ENCODE measurements at regions of chr11 and their contacts with region 1.

Region 1: DNA sequence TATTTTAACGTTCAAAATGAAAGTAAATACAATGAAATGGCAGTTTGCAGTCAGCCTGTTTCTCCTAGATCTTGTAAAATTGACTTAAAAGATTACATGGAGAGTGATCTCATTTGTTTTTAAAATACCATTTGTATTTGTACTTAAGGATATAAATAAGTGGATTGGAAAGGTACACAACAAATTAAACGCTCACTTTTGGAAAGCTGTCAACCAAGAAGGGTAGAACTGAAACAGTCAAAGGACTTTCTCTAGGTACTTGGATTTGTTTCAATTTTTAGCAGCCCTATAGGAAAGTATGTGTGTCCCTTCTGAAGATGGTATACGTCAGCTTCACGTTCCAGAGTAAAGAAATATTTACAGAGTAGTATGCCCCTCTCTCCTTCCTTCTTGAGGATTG is 7.3 kb downstream of the TBRG1 start:
- DNase-seq: no peak
- ATAC-seq: no peak
- H3K4me3 Mint-ChIP-seq: no peak overlapping the region
- H3K27ac Mint-ChIP-seq: no peak overlapping the region
- H3K4me1 Mint-ChIP-seq: peaks cover 19% of the 10 kb centered on the region
- H3K27me3 Mint-ChIP-seq: no peaks in the 10 kb centered on the region
- CTCF ChIP-seq: no peak

Region 2: DNA sequence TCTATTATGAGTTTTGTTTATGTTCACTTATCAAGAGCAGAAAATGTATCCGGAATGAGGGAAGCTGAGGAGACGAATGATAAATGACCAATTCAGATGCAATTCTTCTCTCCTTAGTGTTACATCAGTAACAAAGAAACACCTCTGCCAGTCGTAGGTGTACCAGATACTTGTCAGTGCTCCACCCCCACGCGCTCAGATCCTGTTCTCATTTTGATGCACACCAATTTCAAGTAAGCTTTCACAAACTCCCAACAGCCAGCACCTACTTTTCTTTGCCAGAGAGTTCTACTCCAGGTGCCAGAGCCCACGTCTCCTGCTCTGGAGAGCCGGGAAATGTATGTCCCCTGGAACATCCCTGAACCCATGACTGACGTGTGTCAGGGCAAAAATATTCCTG is 130.2 kb before region 1 on chr11:
- CTCF ChIA-PET with region 1: no interaction called
- POLR2A ChIA-PET with region 1: no interaction called
- intact Hi-C with region 1: no loop called
- DNase-seq: no peak
- ATAC-seq: no peak
- H3K4me3 Mint-ChIP-seq: no peak overlapping the region
- H3K27ac Mint-ChIP-seq: no peak overlapping the region
- H3K4me1 Mint-ChIP-seq: no peaks in the 10 kb centered on the region
- H3K27me3 Mint-ChIP-seq: peaks cover 2% of the 10 kb centered on the region
- CTCF ChIP-seq: no peak

Region 3: GRCh38 chr11:124644426-124645280 is 14.7 kb after region 1 on chr11:
- CTCF ChIA-PET with region 1: interaction called, 11 read pairs
- POLR2A ChIA-PET with region 1: interaction called, 4 read pairs
- intact Hi-C with region 1: no loop called
- DNase-seq: peak; percentile 27
- ATAC-seq: peak; percentile 78
- H3K4me3 Mint-ChIP-seq: no peak overlapping the region
- H3K27ac Mint-ChIP-seq: no peak overlapping the region
- H3K4me1 Mint-ChIP-seq: no peaks in the 10 kb centered on the region
- H3K27me3 Mint-ChIP-seq: no peaks in the 10 kb centered on the region
- CTCF ChIP-seq: peak; percentile 94

Measured in activated CD8-positive, alpha-beta T cell treated with anti-CD3 and anti-CD28 coated beads for 36 hours (primary cell).